ENCODE measurements at regions of chr3 and their contacts with region 1.

Region 1: DNA sequence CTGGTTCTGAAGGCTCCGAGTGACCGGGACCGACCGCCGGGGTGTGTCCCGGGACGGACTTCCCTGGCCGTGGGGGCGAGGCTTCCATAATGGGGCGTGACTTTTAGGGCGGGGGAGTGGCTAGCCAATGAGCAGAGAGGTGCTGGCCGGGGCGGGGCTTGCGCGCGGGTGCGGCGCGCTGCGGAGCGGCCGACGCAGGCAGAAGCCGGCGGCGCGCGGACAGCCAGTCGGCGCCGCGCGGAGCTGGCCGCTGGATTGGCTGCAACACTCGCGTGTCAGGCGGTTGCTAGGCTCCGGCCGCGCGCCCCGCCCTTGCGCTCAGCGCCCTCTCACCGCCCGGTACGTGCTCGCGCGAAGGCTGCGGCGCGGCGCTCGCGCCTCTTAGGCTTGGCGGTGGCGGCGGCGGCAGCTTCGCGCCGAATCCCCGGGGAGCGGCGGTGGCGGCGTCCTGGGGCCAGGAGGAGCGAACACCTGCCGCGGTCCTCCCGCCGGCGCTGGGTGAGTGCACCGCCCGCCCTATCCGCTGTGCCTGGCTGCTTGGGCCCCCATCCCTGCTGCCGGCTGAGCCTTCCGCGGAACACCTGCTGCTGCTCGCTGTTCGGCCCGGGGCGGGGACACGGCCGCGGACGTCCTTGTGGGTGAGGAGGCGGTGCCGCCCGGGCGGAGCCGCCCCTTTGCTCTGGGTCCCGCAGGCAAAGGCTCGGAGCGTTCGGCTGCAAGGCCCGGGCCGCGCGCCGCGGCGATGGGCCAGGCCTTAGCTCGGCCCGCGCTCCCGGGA is at the start of gene DAG1:
- DNase-seq: peak; percentile 93 to 98
- ATAC-seq: peak; percentile 87 to 97 (median 89)
- H3K4me3 ChIP-seq: peak within 1 kb of the TSS; percentile 75
- H3K4me3 Mint-ChIP-seq: peak within 1 kb of the TSS; percentile 91
- H3K27ac ChIP-seq: peak within 1 kb of the TSS; percentile 89
- H3K27ac Mint-ChIP-seq: peak within 1 kb of the TSS; percentile 87 to 90
- H3K4me1 ChIP-seq: peaks cover 22% of the 10 kb centered on the region
- H3K4me1 Mint-ChIP-seq: peaks cover 20 to 23% of the 10 kb centered on the region in 2 donors
- H3K27me3 ChIP-seq: no peaks in the 10 kb centered on the region
- H3K27me3 Mint-ChIP-seq: no peaks in the 10 kb centered on the region
- CTCF ChIP-seq: no peak
- total RNA-seq, gene DAG1: 9.6 to 22.4 (median 20.6) TPM

Region 2: GRCh38 chr3:49339945-49340800 is 130.0 kb before region 1 on chr3 and contains the start of gene USP4:
- intact Hi-C with region 1: loop called (anchors 1 kb)
- DNase-seq: peak; percentile 79 to 96
- ATAC-seq: peak; percentile 88 to 98 (median 91)
- H3K4me3 ChIP-seq: peak within 1 kb of the TSS; percentile 88
- H3K4me3 Mint-ChIP-seq: peak within 1 kb of the TSS; percentile 91
- H3K27ac ChIP-seq: peak within 1 kb of the TSS; percentile 96
- H3K27ac Mint-ChIP-seq: peak within 1 kb of the TSS; percentile 97 to 100
- H3K4me1 ChIP-seq: peaks cover 51% of the 10 kb centered on the region
- H3K4me1 Mint-ChIP-seq: peaks cover 32 to 42% of the 10 kb centered on the region in 2 donors
- H3K27me3 ChIP-seq: no peaks in the 10 kb centered on the region
- H3K27me3 Mint-ChIP-seq: no peaks in the 10 kb centered on the region
- CTCF ChIP-seq: peak; percentile 49
- total RNA-seq, gene USP4: 110 to 138 (median 135) TPM

Region 3: DNA sequence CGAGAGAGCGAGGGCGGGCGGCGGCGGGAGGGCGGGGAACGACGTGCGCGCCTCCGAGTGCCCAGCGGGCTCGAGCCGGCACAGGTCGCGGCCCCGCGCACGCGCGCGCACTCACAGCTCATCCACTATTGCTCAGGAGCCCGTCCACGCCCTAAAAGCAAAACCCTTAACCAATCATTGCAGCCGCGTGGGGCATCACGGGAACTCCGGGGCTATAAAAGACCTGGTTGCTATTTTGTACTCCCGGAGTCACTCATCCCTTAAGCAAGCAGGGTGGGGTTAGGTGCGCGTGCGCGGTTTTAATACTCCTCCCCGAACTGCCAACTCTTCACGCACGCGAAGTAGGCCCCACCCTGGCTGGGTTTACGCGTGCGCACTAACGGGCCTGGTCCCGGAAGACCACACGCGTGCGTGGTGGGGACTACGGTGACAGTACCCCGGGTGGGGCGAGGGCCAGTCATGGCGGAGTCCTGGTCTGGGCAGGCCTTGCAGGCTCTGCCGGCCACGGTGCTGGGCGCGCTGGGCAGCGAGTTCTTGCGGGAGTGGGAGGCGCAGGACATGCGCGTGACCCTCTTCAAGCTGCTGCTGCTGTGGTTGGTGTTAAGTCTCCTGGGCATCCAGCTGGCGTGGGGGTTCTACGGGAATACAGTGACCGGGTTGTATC is 58.0 kb before region 1 on chr3 and contains the starts of genes RHOA and TCTA:
- intact Hi-C with region 1: loop called (anchors 2 kb)
- DNase-seq: peak; percentile 98 to 100
- ATAC-seq: peak; percentile 79 to 91 (median 84)
- H3K4me3 ChIP-seq: peak within 1 kb of the TSS; percentile 77
- H3K4me3 Mint-ChIP-seq: peak within 1 kb of the TSS; percentile 91
- H3K27ac ChIP-seq: peak within 1 kb of the TSS; percentile 90
- H3K27ac Mint-ChIP-seq: peak within 1 kb of the TSS; percentile 97 to 99
- H3K4me1 ChIP-seq: peaks cover 68% of the 10 kb centered on the region
- H3K4me1 Mint-ChIP-seq: peaks cover 66 to 70% of the 10 kb centered on the region in 2 donors
- H3K27me3 ChIP-seq: no peaks in the 10 kb centered on the region
- H3K27me3 Mint-ChIP-seq: no peaks in the 10 kb centered on the region
- CTCF ChIP-seq: no peak
- total RNA-seq, gene RHOA: 342 to 372 (median 370) TPM
- total RNA-seq, gene TCTA: 35.4 to 40.7 (median 36.7) TPM

Region 4: GRCh38 chr3:49493901-49494300 is 23.8 kb after region 1 on chr3:
- intact Hi-C with region 1: no loop called
- DNase-seq: no peak
- ATAC-seq: no peak
- H3K4me3 ChIP-seq: no peak overlapping the region
- H3K4me3 Mint-ChIP-seq: no peak overlapping the region
- H3K27ac ChIP-seq: no peak overlapping the region
- H3K27ac Mint-ChIP-seq: no peak overlapping the region
- H3K4me1 ChIP-seq: no peaks in the 10 kb centered on the region
- H3K4me1 Mint-ChIP-seq: peaks cover 0 to 12% of the 10 kb centered on the region in 2 donors
- H3K27me3 ChIP-seq: no peaks in the 10 kb centered on the region
- H3K27me3 Mint-ChIP-seq: no peaks in the 10 kb centered on the region
- CTCF ChIP-seq: no peak

Region 5: DNA sequence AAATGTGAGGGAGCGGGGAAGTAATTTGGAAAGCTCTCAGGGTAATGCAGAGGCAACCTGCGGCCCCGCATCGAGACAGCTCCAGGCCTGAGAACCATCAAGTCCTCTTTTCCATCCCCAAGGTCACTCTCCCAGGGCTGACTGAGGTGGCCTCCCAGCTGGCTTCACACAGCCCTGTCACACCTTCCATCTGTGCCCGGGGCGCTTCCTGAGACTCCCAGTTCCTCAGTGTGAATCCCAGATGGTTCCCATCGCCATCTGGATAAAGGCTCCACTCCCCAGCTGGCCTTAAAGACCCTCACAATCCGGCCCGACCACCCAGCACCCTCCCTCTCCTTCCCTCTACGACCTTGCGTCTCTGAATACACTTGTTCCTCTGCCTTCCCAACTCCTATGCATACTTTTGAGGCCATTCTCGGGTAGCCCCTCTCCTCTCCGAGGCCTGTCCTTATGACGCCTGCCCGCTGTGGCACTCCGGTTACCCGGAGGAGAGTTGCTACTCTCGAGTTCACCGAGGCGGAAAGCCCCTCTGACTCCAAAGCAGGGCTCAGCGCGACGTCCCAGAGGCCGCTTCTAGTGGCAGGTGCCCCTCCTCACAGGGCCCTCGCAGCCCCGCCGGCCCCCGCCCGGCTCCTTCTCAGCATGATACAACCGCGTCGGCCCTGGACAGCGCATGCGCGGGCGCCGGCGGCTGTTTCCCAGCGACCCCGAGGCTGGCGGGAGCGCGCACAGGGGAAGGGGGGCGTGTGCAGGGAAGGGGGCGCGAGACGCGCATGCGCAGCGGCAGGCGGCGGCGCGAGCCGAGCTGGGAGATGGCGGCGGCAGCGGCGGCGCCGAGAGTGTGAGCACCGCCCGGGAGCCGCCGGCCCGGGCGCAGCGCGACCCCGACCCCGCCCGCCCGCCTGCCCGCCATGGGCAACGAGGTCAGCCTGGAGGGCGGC is 83.8 kb after region 1 on chr3 and contains the start of gene BSN:
- intact Hi-C with region 1: loop called (anchors 1 kb)
- DNase-seq: peak; percentile 84 to 94
- ATAC-seq: peak; percentile 88 to 91 (median 90)
- H3K4me3 ChIP-seq: peak within 1 kb of the TSS; percentile 54
- H3K4me3 Mint-ChIP-seq: peak within 1 kb of the TSS; percentile 85
- H3K27ac ChIP-seq: no peak within 1 kb of the TSS
- H3K27ac Mint-ChIP-seq: peak within 1 kb of the TSS; percentile 46 to 80
- H3K4me1 ChIP-seq: peaks cover 12% of the 10 kb centered on the region
- H3K4me1 Mint-ChIP-seq: peaks cover 6 to 8% of the 10 kb centered on the region in 2 donors
- H3K27me3 ChIP-seq: peaks cover 25% of the 10 kb centered on the region
- H3K27me3 Mint-ChIP-seq: peaks cover 28 to 30% of the 10 kb centered on the region in 2 donors
- CTCF ChIP-seq: no peak
- total RNA-seq, gene BSN: 0.33 to 0.41 (median 0.35) TPM

Region 6: DNA sequence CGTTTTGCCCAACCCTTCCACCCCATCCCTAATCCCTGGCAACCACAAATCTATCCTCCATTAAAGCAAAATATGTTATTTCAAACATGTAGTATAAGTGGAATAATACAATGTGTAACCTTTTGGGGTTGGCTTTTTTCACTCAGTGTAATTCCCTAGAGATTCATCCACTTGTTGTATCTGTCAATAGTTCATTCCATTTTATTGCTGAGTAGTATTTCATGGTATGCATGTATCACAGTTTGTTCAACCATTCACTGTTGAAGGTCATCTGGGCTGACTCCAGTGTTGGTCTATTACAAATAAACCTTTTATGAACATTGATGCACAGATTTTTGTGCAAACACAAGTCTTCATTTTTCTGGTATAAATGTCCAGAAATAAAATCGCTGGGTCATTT is 122.9 kb after region 1 on chr3:
- intact Hi-C with region 1: no loop called
- DNase-seq: no peak
- ATAC-seq: no peak
- H3K4me3 ChIP-seq: no peak overlapping the region
- H3K4me3 Mint-ChIP-seq: no peak overlapping the region
- H3K27ac ChIP-seq: no peak overlapping the region
- H3K27ac Mint-ChIP-seq: no peak overlapping the region
- H3K4me1 ChIP-seq: no peaks in the 10 kb centered on the region
- H3K4me1 Mint-ChIP-seq: no peaks in the 10 kb centered on the region
- H3K27me3 ChIP-seq: no peaks in the 10 kb centered on the region
- H3K27me3 Mint-ChIP-seq: peaks cover 0 to 3% of the 10 kb centered on the region in 2 donors
- CTCF ChIP-seq: no peak

Region 7: DNA sequence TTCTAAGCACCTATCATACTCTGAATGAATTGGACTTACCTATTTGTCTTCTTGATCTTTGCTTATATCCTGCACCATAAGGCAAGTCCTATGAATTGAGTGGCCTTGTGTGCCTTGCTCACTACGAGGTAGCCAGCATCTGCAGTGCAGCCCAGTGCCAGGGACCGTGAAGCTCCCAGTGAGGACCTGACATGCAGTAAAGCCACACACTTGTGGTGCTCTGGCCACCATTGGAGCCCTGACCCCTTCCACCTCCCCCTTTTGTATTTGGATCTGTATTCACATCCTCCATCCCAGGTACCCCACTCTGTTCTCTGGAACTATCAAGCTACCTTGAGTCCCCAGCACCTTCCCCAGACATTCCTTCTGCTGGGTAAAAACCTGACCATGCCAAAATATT is 136.3 kb after region 1 on chr3:
- intact Hi-C with region 1: no loop called
- DNase-seq: no peak
- ATAC-seq: no peak
- H3K4me3 ChIP-seq: no peak overlapping the region
- H3K4me3 Mint-ChIP-seq: no peak overlapping the region
- H3K27ac ChIP-seq: no peak overlapping the region
- H3K27ac Mint-ChIP-seq: no peak overlapping the region
- H3K4me1 ChIP-seq: peaks cover 9% of the 10 kb centered on the region
- H3K4me1 Mint-ChIP-seq: peaks cover 10 to 11% of the 10 kb centered on the region in 2 donors
- H3K27me3 ChIP-seq: no peaks in the 10 kb centered on the region
- H3K27me3 Mint-ChIP-seq: no peaks in the 10 kb centered on the region
- CTCF ChIP-seq: no peak